Activated CD4-positive, alpha-beta T cell treated with anti-CD3 and anti-CD28 coated beads for 36 hours (primary cell): ENCODE measurements at regions of chr17 and their contacts with region 1.

Region 1: DNA sequence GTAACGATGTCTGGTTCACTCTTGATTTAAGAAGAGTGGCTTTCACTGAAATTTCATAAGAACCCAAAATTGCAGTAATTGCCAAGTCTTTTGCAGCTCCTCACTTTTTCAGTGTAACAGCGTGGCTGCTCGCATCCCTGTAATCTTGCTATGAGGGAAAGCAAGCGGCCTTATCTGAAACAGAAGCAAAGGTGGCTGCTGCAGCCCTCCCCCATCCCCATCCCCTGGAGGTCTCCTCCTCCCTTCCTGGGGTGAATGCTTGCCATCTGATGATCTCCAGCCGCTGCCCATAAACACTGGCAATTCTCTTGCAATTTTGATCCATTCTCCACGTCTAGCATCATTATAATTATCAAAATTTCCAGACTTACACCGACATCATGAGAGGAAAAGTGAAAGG is 182.5 kb upstream of the ASIC2 start:
- DNase-seq: no peak
- ATAC-seq: no peak
- H3K4me3 Mint-ChIP-seq: no peak overlapping the region
- H3K27ac Mint-ChIP-seq: no peak overlapping the region
- H3K4me1 Mint-ChIP-seq: no peaks in the 10 kb centered on the region
- H3K27me3 Mint-ChIP-seq: peaks cover 4% of the 10 kb centered on the region

Region 2: DNA sequence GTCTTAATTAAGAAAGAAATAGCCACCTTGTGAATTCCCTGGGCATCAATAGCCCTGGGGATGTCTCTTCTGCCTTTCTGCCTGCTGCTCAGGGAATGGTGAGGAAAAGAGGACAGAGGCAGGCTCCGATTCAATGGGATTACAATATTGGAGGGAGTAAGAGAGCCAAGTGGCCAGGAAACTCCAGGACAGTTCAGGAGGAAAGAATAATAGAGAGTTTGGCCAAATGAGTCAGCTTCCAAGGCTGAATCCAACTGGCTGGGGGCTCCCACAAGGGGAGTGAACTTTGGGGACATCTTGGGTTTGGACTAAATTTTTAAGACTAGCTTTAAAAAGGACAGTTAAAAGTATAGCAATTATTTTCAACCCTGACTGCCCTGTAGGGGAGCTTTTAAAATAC is 53.3 kb after region 1 on chr17:
- CTCF ChIA-PET with region 1: no interaction called
- POLR2A ChIA-PET with region 1: no interaction called
- intact Hi-C with region 1: loop called in 1 of 2 experiments (anchors 5 kb)
- DNase-seq: no peak
- ATAC-seq: no peak
- H3K4me3 Mint-ChIP-seq: no peak overlapping the region
- H3K27ac Mint-ChIP-seq: no peak overlapping the region
- H3K4me1 Mint-ChIP-seq: no peaks in the 10 kb centered on the region
- H3K27me3 Mint-ChIP-seq: no peaks in the 10 kb centered on the region